ENCODE measurements at regions of chr3 and their contacts with region 1.

Region 1: GRCh38 chr3:46970391-46971091 is 6.0 kb downstream of the CCDC12 start:
- DNase-seq: peak; percentile 50 to 71 (median 67)
- ATAC-seq: peak; percentile 77 to 85 (median 82)
- H3K4me3 ChIP-seq: no peak overlapping the region
- H3K27ac ChIP-seq: peak overlapping the region in 11 of 12 donors; percentile 11 to 73 (median 52)
- H3K4me1 ChIP-seq: peaks cover 3 to 98% (median 74%) of the 10 kb centered on the region in 12 donors
- H3K27me3 ChIP-seq: no peaks in the 10 kb centered on the region
- CTCF ChIP-seq: no peak
- POLR2A ChIP-seq: no peak

Region 2: GRCh38 chr3:46936733-46937250 is 33.7 kb before region 1 on chr3:
- intact Hi-C with region 1: loop called in 3 of 10 experiments (anchors 2 to 5 kb)
- DNase-seq: peak in 1 of 5 donors; percentile 22
- ATAC-seq: no peak
- H3K4me3 ChIP-seq: no peak overlapping the region
- H3K27ac ChIP-seq: peak overlapping the region in 11 of 12 donors; percentile 72 to 94 (median 85)
- H3K4me1 ChIP-seq: peaks cover 12 to 92% (median 75%) of the 10 kb centered on the region in 12 donors
- H3K27me3 ChIP-seq: no peaks in the 10 kb centered on the region
- CTCF ChIP-seq: no peak
- POLR2A ChIP-seq: no peak

Measured in heart left ventricle (tissue), 16 donors.